ENCODE measurements at regions of chr22 and their contacts with region 1.

Region 1: GRCh38 chr22:42437488-42438292 is 5.5 kb upstream of the NFAM1 start:
- DNase-seq: peak; percentile 76 to 92
- ATAC-seq: peak; percentile 94 to 98 (median 97)
- H3K4me3 ChIP-seq: peak overlapping the region; percentile 37
- H3K4me3 Mint-ChIP-seq: peak overlapping the region; percentile 59
- H3K27ac ChIP-seq: no peak overlapping the region
- H3K27ac Mint-ChIP-seq: peak overlapping the region in 1 of 2 donors; percentile 65
- H3K4me1 ChIP-seq: peaks cover 33% of the 10 kb centered on the region
- H3K4me1 Mint-ChIP-seq: peaks cover 0 to 12% of the 10 kb centered on the region in 2 donors
- H3K27me3 ChIP-seq: peaks cover 5% of the 10 kb centered on the region
- H3K27me3 Mint-ChIP-seq: peaks cover 7 to 14% of the 10 kb centered on the region in 2 donors
- CTCF ChIP-seq: peak; percentile 93

Region 2: GRCh38 chr22:41966607-41967240 is 471.0 kb before region 1 on chr22:
- intact Hi-C with region 1: loop called (anchors 1 kb)
- DNase-seq: peak in 1 of 2 donors; percentile 75
- ATAC-seq: peak; percentile 43 to 77 (median 58)
- H3K4me3 ChIP-seq: no peak overlapping the region
- H3K4me3 Mint-ChIP-seq: no peak overlapping the region
- H3K27ac ChIP-seq: no peak overlapping the region
- H3K27ac Mint-ChIP-seq: no peak overlapping the region
- H3K4me1 ChIP-seq: no peaks in the 10 kb centered on the region
- H3K4me1 Mint-ChIP-seq: peaks cover 0 to 6% of the 10 kb centered on the region in 2 donors
- H3K27me3 ChIP-seq: no peaks in the 10 kb centered on the region
- H3K27me3 Mint-ChIP-seq: no peaks in the 10 kb centered on the region
- CTCF ChIP-seq: no peak

Region 3: GRCh38 chr22:42169055-42169469 is 268.6 kb before region 1 on chr22:
- intact Hi-C with region 1: loop called (anchors 1 kb)
- DNase-seq: peak; percentile 60 to 86
- ATAC-seq: peak; percentile 74 to 92 (median 88)
- H3K4me3 ChIP-seq: no peak overlapping the region
- H3K4me3 Mint-ChIP-seq: no peak overlapping the region
- H3K27ac ChIP-seq: no peak overlapping the region
- H3K27ac Mint-ChIP-seq: no peak overlapping the region
- H3K4me1 ChIP-seq: peaks cover 10% of the 10 kb centered on the region
- H3K4me1 Mint-ChIP-seq: peaks cover 14 to 26% of the 10 kb centered on the region in 2 donors
- H3K27me3 ChIP-seq: no peaks in the 10 kb centered on the region
- H3K27me3 Mint-ChIP-seq: no peaks in the 10 kb centered on the region
- CTCF ChIP-seq: peak; percentile 85

Region 4: DNA sequence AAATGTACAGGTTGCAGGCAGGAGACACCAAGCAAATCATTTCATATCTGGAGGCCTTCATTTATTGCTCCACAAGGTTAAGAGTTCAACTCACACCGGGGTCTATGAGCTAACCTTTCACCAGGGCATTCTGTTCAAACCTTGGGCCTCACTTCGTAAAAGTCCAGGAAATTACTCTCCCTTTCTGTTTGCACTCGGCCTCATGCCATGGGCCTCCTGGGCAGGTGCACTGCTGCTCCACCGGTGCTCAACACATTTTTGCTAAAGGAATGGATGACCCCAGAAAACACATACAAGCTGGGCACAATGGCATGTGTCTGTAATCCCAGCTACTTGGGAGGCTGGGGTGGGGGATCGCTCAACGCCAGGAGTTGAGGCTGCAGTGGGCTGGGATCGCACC is 98.5 kb after region 1 on chr22:
- intact Hi-C with region 1: no loop called
- DNase-seq: no peak
- ATAC-seq: no peak
- H3K4me3 ChIP-seq: no peak overlapping the region
- H3K4me3 Mint-ChIP-seq: no peak overlapping the region
- H3K27ac ChIP-seq: no peak overlapping the region
- H3K27ac Mint-ChIP-seq: no peak overlapping the region
- H3K4me1 ChIP-seq: peaks cover 27% of the 10 kb centered on the region
- H3K4me1 Mint-ChIP-seq: peaks cover 0 to 10% of the 10 kb centered on the region in 2 donors
- H3K27me3 ChIP-seq: no peaks in the 10 kb centered on the region
- H3K27me3 Mint-ChIP-seq: no peaks in the 10 kb centered on the region
- CTCF ChIP-seq: no peak

Measured in natural killer cell (primary cell).